ENCODE measurements at regions of chr13 and their contacts with region 1.

Region 1: DNA sequence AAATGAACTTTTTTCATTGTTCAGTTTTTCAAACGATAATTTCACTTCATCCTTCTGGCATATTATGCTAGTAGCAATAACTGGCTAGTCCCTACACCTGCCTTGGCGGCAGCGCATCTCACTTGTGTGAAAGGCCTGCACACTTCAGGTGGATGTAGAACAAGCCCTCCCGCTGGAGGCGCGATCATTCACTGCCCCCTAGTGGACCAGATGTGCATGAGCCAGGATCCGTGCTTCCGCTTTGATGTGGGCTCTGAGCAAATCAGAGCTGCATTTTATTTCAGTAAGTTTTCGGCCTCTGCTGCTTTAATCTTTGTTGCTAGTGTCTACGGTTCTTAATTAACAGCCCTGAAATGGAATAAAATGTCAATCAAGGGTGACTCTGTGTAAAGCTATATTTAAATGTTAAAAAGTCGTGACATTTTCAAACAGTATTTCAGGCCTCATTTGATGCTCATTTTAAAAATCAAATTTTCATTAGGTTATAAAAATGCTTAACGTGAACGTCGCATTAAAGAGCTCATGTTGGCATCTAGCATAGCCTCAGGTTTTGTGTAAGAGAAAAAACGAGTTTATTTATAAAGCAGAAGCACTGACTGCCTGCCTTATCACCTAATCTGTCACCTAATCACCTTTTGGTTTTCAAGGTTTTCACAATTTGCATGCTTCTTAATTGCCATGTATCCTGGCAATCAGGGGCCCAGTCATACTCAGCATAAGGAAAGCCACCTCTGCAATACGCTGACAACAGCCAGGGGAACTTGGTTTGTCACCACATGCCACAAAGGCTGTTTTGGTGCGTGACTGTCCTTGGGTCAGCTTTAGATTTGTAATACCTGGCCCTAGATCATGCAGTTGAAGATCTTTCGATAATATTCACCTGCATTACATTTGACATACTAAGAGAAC is 112.2 kb downstream of the TEX26 start:
- DNase-seq: peak; percentile 61 to 90
- ATAC-seq: peak; percentile 93 to 99 (median 93)
- H3K4me3 ChIP-seq: no peak overlapping the region
- H3K4me3 Mint-ChIP-seq: no peak overlapping the region
- H3K27ac ChIP-seq: no peak overlapping the region
- H3K27ac Mint-ChIP-seq: no peak overlapping the region
- H3K4me1 ChIP-seq: peaks cover 24% of the 10 kb centered on the region
- H3K4me1 Mint-ChIP-seq: peaks cover 16 to 25% of the 10 kb centered on the region in 2 donors
- H3K27me3 ChIP-seq: peaks cover 16% of the 10 kb centered on the region
- H3K27me3 Mint-ChIP-seq: peaks cover 18 to 43% of the 10 kb centered on the region in 2 donors
- CTCF ChIP-seq: peak; percentile 94

Region 2: DNA sequence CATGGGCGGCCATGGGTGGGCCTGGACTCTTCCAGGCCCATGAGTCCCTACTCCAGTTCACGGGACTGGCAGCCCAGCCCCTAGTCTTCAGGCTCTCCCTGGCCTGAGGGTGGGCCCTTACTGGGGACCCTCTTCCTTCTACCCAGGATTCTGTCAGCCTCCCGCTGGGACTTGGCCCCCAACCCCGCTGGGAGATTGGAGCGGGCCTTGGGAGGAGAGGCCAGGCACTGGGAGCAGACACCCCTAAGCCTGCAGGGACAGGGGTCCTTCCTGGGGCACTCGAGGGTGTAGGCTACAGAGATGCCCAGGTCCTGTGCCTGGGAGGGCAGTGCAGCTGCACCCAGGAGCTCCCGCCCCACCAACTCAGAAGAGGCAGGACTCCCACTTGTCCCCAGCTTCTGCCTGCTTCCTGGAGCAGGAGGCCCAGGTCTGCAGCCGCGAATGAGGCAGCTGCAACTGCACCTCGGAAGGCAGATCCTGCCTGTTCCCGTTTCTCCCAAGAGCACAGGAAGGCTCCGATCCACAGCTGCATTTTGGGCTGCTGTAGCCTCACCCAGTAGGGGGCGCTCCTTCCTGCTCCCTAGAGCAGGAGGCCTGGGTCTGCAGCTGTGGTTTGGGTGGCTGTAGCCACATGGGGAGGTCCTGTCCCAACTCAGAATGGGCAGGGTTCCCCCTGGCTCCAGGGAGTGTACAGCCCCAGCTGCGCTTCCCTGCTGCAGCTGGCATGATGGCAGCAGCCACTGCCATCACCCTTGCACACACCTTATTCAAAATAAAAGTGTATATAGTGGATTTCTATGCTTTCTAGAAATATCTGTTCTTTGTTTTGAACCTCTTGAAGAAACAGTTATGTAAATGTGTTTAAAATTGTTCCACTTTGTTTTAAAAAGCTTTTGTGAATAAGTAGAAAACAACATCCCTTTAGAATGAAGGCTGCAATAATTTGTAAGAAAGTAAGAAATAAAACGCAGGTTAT is 65.4 kb before region 1 on chr13:
- intact Hi-C with region 1: loop called (anchors 1 kb)
- DNase-seq: peak; percentile 17 to 57
- ATAC-seq: no peak
- H3K4me3 ChIP-seq: no peak overlapping the region
- H3K4me3 Mint-ChIP-seq: no peak overlapping the region
- H3K27ac ChIP-seq: no peak overlapping the region
- H3K27ac Mint-ChIP-seq: no peak overlapping the region
- H3K4me1 ChIP-seq: no peaks in the 10 kb centered on the region
- H3K4me1 Mint-ChIP-seq: no peaks in the 10 kb centered on the region
- H3K27me3 ChIP-seq: peaks cover 2% of the 10 kb centered on the region
- H3K27me3 Mint-ChIP-seq: peaks cover 14 to 42% of the 10 kb centered on the region in 2 donors
- CTCF ChIP-seq: peak; percentile 51

Region 3: DNA sequence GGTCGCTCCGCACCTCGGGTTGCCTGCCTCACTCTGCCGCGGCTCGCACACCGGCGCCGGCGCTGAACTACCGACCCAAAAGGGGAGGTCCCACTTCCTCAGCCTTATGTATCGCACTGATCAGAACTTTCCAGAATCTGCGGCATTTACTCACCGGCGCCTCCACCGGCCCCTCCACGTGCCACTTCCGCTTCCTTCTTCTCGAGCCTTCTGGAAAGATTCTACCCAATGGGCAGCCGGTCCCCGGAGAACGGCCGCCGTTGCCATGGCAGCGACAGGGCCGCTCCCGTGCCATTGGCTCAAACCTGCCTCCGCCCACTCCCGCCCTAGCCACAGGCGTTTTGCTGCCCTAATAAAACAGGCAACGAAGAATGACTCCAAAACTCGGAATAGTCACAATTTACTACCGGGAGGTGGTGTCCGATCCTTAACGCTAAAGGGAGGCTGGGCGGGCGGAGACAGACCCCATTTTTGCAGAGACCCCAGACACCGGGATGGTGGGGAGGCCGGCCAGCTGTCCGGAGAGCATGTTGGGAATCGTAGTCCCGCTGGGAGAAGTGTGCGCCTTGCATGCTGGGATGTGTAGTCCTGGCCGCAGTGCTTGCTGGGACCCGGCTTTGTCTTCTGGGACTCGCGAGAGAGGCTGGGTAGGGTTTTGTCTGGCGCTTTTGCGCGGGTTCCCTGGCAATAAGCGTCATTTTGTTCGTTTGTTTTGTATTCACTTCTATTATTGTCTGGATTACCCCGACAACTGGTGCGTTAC is 117.4 kb after region 1 on chr13 and contains the start of gene HSPH1:
- intact Hi-C with region 1: no loop called
- DNase-seq: peak; percentile 96 to 99
- ATAC-seq: peak; percentile 86 to 96 (median 88)
- H3K4me3 ChIP-seq: peak within 1 kb of the TSS; percentile 81
- H3K4me3 Mint-ChIP-seq: peak within 1 kb of the TSS; percentile 99
- H3K27ac ChIP-seq: peak within 1 kb of the TSS; percentile 88
- H3K27ac Mint-ChIP-seq: peak within 1 kb of the TSS; percentile 95 to 99
- H3K4me1 ChIP-seq: peaks cover 8% of the 10 kb centered on the region
- H3K4me1 Mint-ChIP-seq: peaks cover 42 to 47% of the 10 kb centered on the region in 2 donors
- H3K27me3 ChIP-seq: no peaks in the 10 kb centered on the region
- H3K27me3 Mint-ChIP-seq: no peaks in the 10 kb centered on the region
- CTCF ChIP-seq: no peak
- total RNA-seq, gene HSPH1: 51.2 to 81.6 (median 75.4) TPM

Measured in natural killer cell (primary cell).